AG04449 (cell line): ENCODE measurements at regions of chr3 and their contacts with region 1.

Region 1: DNA sequence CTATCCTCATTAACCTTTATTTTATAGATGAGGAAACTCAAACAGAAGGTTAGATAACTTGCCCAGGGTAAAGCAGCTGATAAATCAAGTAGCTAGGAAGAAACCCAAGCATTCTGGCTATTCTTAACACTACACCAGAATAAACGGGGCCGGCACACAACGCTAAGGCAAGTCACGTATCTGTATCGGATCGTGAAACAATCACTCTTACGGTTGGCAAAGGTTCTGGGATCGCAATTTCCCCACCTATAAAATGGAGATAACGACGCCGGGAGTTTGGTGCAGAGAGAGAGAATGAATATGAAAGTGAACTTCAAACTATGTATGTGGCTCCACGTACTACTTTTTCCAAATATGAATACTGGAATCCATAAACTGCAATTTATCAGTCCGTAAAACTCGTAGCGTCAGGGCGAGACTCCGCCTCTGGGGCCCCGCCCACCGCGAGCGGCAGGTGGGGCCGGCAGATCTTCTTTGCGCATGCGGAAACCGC is 252 bp upstream of the ARMC8 start:
- DNase-seq: peak; percentile 26
- H3K4me3 ChIP-seq: peak overlapping the region; percentile 84
- CTCF ChIP-seq: no peak

Region 2: DNA sequence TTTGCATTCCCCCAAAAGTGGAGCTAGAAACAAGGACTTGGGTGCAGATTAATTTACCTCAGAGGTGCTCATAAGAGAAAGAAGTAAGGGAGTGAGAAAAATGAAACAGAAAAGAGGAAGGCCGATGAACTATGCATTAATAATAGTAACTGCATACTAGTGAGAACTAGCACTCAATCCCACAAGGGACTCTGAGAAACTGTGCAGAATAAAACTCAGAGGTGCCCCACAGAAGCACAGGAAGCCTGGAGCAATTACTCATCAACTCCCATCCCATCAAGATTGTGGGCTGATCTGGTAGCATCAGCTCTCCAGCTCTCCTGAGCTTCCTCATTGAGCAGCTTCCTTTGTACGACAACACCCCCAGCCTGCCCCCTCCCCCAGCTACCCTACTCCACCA is 126.1 kb before region 1 on chr3:
- CTCF ChIA-PET with region 1: no interaction called
- POLR2A ChIA-PET with region 1: no interaction called
- DNase-seq: no peak
- H3K4me3 ChIP-seq: no peak overlapping the region
- CTCF ChIP-seq: no peak

Region 3: GRCh38 chr3:138174421-138175122 is 12.3 kb before region 1 on chr3 and contains the start of gene DBR1:
- CTCF ChIA-PET with region 1: interaction called, 10 read pairs
- POLR2A ChIA-PET with region 1: interaction called, 16 read pairs
- DNase-seq: no peak
- H3K4me3 ChIP-seq: peak within 1 kb of the TSS; percentile 93
- CTCF ChIP-seq: no peak